A673 (cell line): ENCODE measurements at regions of chr18 and their contacts with region 1.

Region 1: DNA sequence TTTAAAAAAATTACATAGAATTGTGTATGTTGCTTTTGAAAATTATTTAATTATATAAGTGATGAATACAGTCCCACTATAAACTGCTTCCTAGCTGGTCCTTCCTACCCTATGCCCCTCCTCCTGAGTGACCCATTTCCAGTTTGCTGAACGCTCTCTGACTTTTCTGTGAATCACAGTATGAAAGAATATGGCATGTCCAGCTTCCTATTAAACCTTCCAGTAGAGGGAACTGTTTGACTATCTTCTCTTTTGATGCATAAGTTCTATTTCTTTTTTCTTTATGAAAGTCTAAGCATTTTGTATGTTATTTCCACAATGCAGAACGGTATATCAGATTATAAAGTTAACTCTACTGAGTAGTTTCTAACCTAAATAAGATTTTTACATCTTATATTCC is 41.3 kb downstream of the PSMG2 start:
- DNase-seq: peak; percentile 61
- H3K4me3 ChIP-seq: no peak overlapping the region
- H3K27ac ChIP-seq: no peak overlapping the region
- H3K4me1 ChIP-seq: peaks cover 7% of the 10 kb centered on the region
- H3K27me3 ChIP-seq: no peaks in the 10 kb centered on the region
- CTCF ChIP-seq: peak; percentile 67

Region 2: GRCh38 chr18:11114664-11115063 is 1629.4 kb before region 1 on chr18:
- CTCF ChIA-PET with region 1: no interaction called
- POLR2A ChIA-PET with region 1: no interaction called
- intact Hi-C with region 1: no loop called
- DNase-seq: no peak
- H3K4me3 ChIP-seq: no peak overlapping the region
- H3K27ac ChIP-seq: no peak overlapping the region
- H3K4me1 ChIP-seq: no peaks in the 10 kb centered on the region
- H3K27me3 ChIP-seq: peaks cover 3% of the 10 kb centered on the region
- CTCF ChIP-seq: no peak

Region 3: DNA sequence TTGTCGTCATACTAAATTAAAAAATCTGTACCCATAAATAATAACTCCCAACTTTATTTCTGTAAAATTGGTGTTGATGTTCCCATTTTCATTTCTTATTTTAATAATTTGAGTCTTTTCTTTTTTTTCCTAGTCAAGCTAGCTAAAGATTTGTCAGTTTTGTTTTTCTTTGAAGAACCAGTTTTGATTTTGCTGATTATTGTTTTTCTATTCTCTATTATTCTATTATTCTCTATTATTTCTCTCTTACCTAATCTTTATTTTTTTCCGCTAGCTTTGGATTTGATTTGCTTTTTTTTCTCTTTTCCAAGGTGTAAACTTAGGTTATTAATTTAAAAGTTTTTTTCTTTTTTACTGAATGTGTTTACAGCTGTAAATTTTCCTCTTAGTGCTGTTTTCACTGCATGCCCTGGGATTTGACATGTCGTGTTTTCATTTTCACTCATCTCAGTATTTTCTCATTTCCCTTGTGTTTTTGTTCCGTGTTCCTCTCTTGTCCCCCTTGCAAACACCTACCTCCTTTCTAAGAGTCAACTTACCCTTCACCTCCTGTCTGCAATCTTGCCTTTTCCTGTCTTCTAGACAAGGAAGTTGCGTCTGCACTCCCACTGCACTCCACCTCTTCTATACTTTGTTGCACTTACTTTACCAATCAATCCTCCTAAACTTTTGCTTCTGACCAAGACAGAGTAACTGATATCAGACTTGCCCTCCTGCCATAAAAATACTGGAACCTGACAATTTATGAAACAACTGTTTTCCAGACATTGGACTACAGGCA is 22.4 kb before region 1 on chr18:
- CTCF ChIA-PET with region 1: no interaction called
- POLR2A ChIA-PET with region 1: no interaction called
- intact Hi-C with region 1: no loop called
- DNase-seq: no peak
- H3K4me3 ChIP-seq: no peak overlapping the region
- H3K27ac ChIP-seq: no peak overlapping the region
- H3K4me1 ChIP-seq: no peaks in the 10 kb centered on the region
- H3K27me3 ChIP-seq: no peaks in the 10 kb centered on the region
- CTCF ChIP-seq: no peak

Region 4: GRCh38 chr18:12777500-12777944 is 33.4 kb after region 1 on chr18:
- CTCF ChIA-PET with region 1: no interaction called
- POLR2A ChIA-PET with region 1: interaction called, 15 read pairs
- intact Hi-C with region 1: no loop called
- DNase-seq: peak; percentile 15
- H3K4me3 ChIP-seq: peak overlapping the region; percentile 31
- H3K27ac ChIP-seq: no peak overlapping the region
- H3K4me1 ChIP-seq: no peaks in the 10 kb centered on the region
- H3K27me3 ChIP-seq: no peaks in the 10 kb centered on the region
- CTCF ChIP-seq: no peak

Region 5: DNA sequence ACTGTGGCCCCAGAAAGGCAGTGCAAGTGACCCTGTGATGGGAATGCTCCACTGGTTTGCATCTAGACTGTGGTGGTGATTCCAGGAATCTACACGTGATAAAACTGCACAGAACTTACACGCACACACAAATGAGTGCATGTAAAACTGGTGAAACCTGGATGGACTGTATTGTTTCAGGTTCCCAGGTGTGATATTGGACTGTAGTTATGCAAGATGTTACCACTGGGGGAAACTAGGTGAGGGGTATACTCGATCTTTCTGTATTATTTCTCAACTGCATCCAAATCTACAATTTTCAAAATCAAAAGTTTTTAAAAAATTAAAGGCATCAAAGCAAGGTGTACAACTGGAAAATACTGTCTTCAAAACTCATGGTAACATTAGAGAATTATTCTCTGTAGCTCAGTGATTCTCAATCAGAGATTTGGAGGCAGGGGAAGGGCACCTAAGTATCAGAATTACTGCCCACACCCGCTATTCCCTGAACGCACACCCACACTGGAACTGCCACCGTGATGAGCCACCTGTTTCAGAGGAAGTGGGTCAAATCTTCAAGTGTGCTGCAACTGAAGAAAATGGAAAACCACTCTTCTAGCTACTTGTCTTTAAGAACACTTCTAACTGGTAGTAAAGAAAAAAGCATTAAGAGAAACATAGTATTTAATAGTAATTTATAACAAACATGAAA is 113.3 kb after region 1 on chr18:
- CTCF ChIA-PET with region 1: no interaction called
- POLR2A ChIA-PET with region 1: no interaction called
- intact Hi-C with region 1: no loop called
- DNase-seq: no peak
- H3K4me3 ChIP-seq: no peak overlapping the region
- H3K27ac ChIP-seq: no peak overlapping the region
- H3K4me1 ChIP-seq: no peaks in the 10 kb centered on the region
- H3K27me3 ChIP-seq: no peaks in the 10 kb centered on the region
- CTCF ChIP-seq: no peak

Region 6: GRCh38 chr18:12895626-12896025 is 151.5 kb after region 1 on chr18:
- CTCF ChIA-PET with region 1: no interaction called
- POLR2A ChIA-PET with region 1: no interaction called
- intact Hi-C with region 1: loop called (anchors 2 kb)
- DNase-seq: no peak
- H3K4me3 ChIP-seq: no peak overlapping the region
- H3K27ac ChIP-seq: no peak overlapping the region
- H3K4me1 ChIP-seq: no peaks in the 10 kb centered on the region
- H3K27me3 ChIP-seq: no peaks in the 10 kb centered on the region
- CTCF ChIP-seq: no peak

Region 7: DNA sequence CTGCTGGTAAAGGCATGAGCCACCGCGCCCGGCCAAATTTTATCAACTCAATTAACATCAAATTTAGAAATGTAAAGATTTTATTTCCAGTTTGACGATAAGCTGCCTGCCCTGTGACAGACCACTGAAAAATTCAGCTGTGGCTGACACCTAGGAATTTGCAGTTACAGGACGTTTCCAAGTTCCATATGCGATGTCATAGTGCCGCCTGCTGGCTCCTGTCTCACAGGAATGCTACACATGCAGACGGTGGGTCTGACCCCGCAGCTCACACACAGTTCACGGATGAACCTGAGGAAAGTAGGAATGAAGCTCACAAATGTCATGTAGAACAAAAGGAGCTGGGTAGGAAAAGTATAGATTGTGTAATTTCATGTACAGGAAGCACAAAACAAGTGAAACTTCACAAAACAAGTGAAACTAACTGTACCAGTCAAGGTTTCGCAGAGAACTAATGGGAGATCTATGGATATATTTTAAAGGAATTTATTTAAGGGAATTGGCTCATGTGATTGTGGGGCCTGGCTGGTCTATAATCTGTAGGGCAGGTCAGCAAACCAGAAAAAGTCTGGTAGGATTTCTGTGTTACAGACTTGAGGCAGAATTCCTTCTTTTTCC is 190.5 kb after region 1 on chr18:
- CTCF ChIA-PET with region 1: interaction called, 14 read pairs
- POLR2A ChIA-PET with region 1: no interaction called
- intact Hi-C with region 1: loop called (anchors 1 kb)
- DNase-seq: peak; percentile 86
- H3K4me3 ChIP-seq: no peak overlapping the region
- H3K27ac ChIP-seq: no peak overlapping the region
- H3K4me1 ChIP-seq: no peaks in the 10 kb centered on the region
- H3K27me3 ChIP-seq: no peaks in the 10 kb centered on the region
- CTCF ChIP-seq: peak; percentile 95